Gastrocnemius medialis (tissue), 4 donors: ENCODE measurements at regions of chr4 and their contacts with region 1.

Region 1: GRCh38 chr4:128863312-128864075 is 54.0 kb downstream of the JADE1 start:
- DNase-seq: peak; percentile 53 to 61
- ATAC-seq: peak; percentile 70 to 84
- H3K4me3 ChIP-seq: no peak overlapping the region
- H3K27ac ChIP-seq: no peak overlapping the region
- H3K4me1 ChIP-seq: no peaks in the 10 kb centered on the region
- H3K27me3 ChIP-seq: no peaks in the 10 kb centered on the region
- CTCF ChIP-seq: peak; percentile 68 to 91 (median 88)
- POLR2A ChIP-seq: no peak

Region 2: GRCh38 chr4:128191115-128191781 is 672.2 kb before region 1 on chr4:
- in situ Hi-C with region 1: loop called (anchors 5 to 25 kb)
- intact Hi-C with region 1: loop called (anchors 1 kb)
- DNase-seq: peak; percentile 29 to 61
- ATAC-seq: peak; percentile 76 to 95
- H3K4me3 ChIP-seq: no peak overlapping the region
- H3K27ac ChIP-seq: no peak overlapping the region
- H3K4me1 ChIP-seq: peaks cover 0 to 7% of the 10 kb centered on the region in 2 donors
- H3K27me3 ChIP-seq: no peaks in the 10 kb centered on the region
- CTCF ChIP-seq: peak; percentile 66 to 88 (median 82)
- POLR2A ChIP-seq: no peak

Region 3: GRCh38 chr4:128298852-128299251 is 564.6 kb before region 1 on chr4:
- in situ Hi-C with region 1: no loop called
- intact Hi-C with region 1: no loop called
- DNase-seq: no peak
- ATAC-seq: no peak
- H3K4me3 ChIP-seq: no peak overlapping the region
- H3K27ac ChIP-seq: no peak overlapping the region
- H3K4me1 ChIP-seq: no peaks in the 10 kb centered on the region
- H3K27me3 ChIP-seq: no peaks in the 10 kb centered on the region
- CTCF ChIP-seq: no peak
- POLR2A ChIP-seq: no peak

Region 4: GRCh38 chr4:128410037-128410436 is 453.5 kb before region 1 on chr4:
- in situ Hi-C with region 1: no loop called
- intact Hi-C with region 1: no loop called
- DNase-seq: no peak
- ATAC-seq: no peak
- H3K4me3 ChIP-seq: no peak overlapping the region
- H3K27ac ChIP-seq: no peak overlapping the region
- H3K4me1 ChIP-seq: no peaks in the 10 kb centered on the region
- H3K27me3 ChIP-seq: no peaks in the 10 kb centered on the region
- CTCF ChIP-seq: no peak
- POLR2A ChIP-seq: no peak

Region 5: DNA sequence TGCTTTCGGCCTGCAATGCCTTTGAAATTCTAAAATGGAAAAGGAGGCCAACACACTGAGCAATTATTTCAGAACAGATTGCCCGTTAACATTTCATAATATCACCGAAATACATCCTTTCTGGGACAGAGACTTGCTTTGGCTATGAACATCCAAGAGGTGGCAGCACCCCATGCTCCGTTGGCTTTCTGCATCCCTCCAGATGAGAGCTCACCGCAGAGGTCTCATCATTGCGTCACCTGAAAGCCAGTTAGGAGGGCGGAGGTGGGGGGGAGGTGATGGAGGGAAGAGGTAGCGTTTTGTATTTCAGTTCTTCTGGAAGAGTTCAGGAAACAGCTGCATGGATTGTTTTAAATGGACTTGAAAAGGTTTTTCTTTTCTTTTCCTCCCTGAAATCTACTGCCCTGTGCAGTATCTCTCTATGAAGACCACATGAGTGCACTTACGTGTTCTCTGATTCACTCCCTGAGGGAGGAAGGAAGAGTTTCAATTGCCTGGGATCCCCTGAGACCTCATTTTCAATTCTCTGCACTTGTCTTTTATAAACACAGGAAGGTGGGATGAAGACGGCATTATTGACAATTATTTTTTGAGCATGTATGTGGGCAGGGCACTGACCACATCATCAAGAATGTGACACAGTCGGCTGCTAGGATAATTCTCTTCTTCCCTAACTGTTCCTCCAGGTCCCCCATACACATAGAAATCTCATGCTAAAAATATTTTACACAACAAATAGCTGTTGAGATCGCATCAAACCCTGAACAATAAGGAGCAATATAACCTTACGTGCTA is 409.0 kb before region 1 on chr4:
- in situ Hi-C with region 1: loop called in 3 of 4 experiments (anchors 5 to 25 kb)
- intact Hi-C with region 1: loop called (anchors 10 kb)
- DNase-seq: peak; percentile 70 to 81
- ATAC-seq: peak; percentile 93 to 94
- H3K4me3 ChIP-seq: no peak overlapping the region
- H3K27ac ChIP-seq: peak overlapping the region in 2 of 4 donors; percentile 9
- H3K4me1 ChIP-seq: peaks cover 17 to 20% of the 10 kb centered on the region in 2 donors
- H3K27me3 ChIP-seq: no peaks in the 10 kb centered on the region
- CTCF ChIP-seq: peak; percentile 50 to 80 (median 71)
- POLR2A ChIP-seq: no peak

Region 6: DNA sequence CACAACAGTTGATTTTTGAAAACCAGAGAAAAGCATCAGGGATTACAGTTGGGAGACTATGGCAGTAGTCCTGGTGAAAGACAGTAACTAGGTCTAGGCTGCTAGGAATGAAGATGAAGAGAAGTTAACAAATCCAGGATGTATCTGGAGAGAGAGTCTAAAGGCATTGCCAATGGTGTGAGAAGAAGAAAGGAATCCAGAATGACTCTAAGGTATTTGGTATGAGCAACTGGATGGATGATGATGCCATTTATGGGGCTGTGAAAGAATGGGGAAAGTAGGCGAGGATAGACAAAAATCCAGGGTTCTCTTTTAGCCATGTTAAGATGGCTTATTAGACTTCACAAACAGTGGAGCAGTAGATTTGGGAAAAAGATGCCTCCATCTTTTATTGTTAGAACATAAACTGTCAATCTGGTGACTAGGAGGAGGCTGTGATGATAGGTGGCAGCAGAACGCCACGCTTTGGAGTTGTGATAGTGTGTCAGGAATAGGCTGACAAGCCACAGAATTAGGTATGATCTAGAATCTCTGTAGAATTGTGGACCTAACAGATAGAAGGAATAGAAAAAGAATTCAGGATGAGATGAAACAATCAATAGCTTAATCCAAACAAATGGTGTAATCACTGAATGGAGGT is 81.3 kb before region 1 on chr4:
- in situ Hi-C with region 1: loop called (anchors 5 to 10 kb)
- intact Hi-C with region 1: loop called (anchors 1 kb)
- DNase-seq: peak; percentile 35 to 59
- ATAC-seq: peak; percentile 80 to 84
- H3K4me3 ChIP-seq: no peak overlapping the region
- H3K27ac ChIP-seq: peak overlapping the region in 3 of 4 donors; percentile 41 to 69 (median 43)
- H3K4me1 ChIP-seq: no peaks in the 10 kb centered on the region
- H3K27me3 ChIP-seq: no peaks in the 10 kb centered on the region
- CTCF ChIP-seq: peak in 4 of 5 experiments; percentile 12 to 69 (median 40)
- POLR2A ChIP-seq: no peak